ENCODE measurements at regions of chr19 and their contacts with region 1.

Region 1: DNA sequence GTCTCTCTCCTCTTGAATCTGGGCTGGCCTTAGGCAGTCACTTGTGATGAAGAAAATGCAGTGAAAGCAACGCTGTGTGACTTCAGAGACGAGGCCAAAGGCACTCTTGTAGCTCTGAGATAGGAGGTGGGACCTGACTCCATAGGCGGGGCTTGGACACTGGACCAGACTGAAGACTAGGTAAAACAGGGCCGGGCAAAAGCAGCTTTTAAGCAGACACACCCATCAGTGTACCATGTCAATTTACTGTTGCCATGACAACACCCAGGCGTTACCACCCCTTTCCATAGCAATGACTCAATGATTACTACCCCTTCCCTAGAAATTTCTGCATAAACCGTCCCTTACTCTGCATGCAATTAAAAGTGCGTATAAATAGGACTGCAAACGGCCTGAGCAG is 6.6 kb upstream of the EID2 start:
- DNase-seq: no peak
- H3K4me3 Mint-ChIP-seq: no peak overlapping the region
- H3K27ac Mint-ChIP-seq: no peak overlapping the region
- H3K4me1 Mint-ChIP-seq: peaks cover 13% of the 10 kb centered on the region
- H3K27me3 Mint-ChIP-seq: no peaks in the 10 kb centered on the region

Region 2: GRCh38 chr19:39631178-39631577 is 84.6 kb after region 1 on chr19:
- intact Hi-C with region 1: loop called (anchors 1 kb)
- DNase-seq: no peak
- H3K4me3 Mint-ChIP-seq: no peak overlapping the region
- H3K27ac Mint-ChIP-seq: no peak overlapping the region
- H3K4me1 Mint-ChIP-seq: no peaks in the 10 kb centered on the region
- H3K27me3 Mint-ChIP-seq: peaks cover 5% of the 10 kb centered on the region

Region 3: GRCh38 chr19:39737351-39737750 is 190.8 kb after region 1 on chr19:
- intact Hi-C with region 1: no loop called
- DNase-seq: no peak
- H3K4me3 Mint-ChIP-seq: no peak overlapping the region
- H3K27ac Mint-ChIP-seq: peak overlapping the region; percentile 37
- H3K4me1 Mint-ChIP-seq: peaks cover 54% of the 10 kb centered on the region
- H3K27me3 Mint-ChIP-seq: peaks cover 3% of the 10 kb centered on the region

Region 4: DNA sequence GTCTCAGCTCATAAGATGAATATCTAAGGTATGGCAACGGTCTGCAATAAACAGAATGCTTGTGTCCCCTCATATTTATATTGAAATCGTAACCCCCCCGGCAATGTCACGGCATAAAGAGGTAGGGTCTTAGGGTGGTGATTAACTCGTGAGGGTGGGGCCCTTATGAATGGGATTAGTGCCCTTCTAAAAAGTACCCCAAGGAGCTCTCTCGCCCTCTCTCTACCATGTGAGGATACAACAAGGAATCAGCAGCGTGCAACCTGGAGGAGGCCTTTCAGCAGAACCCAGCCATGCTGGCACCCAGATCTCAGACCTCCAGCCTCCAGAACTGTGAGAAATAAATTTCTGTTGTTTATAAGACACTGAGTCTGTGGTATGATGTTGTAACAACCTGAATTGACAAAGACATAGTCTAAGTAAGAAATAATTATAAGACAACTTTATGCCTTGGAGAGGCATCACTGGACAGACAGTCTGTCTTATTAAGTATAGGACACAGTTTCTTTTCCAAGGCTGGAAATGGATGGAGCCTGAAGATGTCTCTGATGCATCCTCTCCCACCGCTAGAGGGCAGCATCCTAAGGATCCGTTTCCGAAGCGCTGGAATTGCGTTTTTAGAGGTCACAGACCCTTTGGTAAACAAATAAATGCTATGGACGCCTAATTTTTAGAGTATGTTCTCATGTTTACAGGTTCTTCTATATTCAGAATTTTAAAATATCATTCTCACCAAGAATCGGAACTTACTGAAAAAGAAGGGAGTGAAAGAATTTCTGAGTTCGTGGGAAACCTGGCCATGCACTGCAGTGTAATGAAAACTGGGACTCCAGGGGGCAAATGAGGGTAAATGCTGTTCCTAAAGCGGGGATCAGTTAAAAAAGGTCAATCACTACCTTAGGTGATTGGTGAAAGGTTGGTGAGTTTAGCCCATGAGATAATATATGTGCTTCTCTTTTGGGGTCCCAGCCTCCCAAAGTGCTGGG is 218.8 kb after region 1 on chr19:
- intact Hi-C with region 1: loop called (anchors 2 kb)
- DNase-seq: no peak
- H3K4me3 Mint-ChIP-seq: no peak overlapping the region
- H3K27ac Mint-ChIP-seq: no peak overlapping the region
- H3K4me1 Mint-ChIP-seq: no peaks in the 10 kb centered on the region
- H3K27me3 Mint-ChIP-seq: peaks cover 11% of the 10 kb centered on the region

Measured in activated T-helper 1 cell treated with anti-CD3 and anti-CD28 coated beads, Interleukin-12 subunit alpha, Interleukin-12 subunit beta, Interleukin-2, Interleukin-4 antibody, amounts not matched to agents 30 ng/mL and 10 ng/mL and 1 ng/mL, durations not matched to agents 14 hours and 24 hours and 36 hours (primary cell).